Stomach (tissue), 19 donors: ENCODE measurements at regions of chr5 and their contacts with region 1.

Region 1: GRCh38 chr5:81859624-81860023 is 108.7 kb upstream of the SSBP2 start:
- DNase-seq: no peak
- H3K4me3 ChIP-seq: no peak overlapping the region
- H3K27ac ChIP-seq: no peak overlapping the region
- H3K4me1 ChIP-seq: peaks cover 10 to 35% (median 16%) of the 10 kb centered on the region in 4 donors
- H3K27me3 ChIP-seq: no peaks in the 10 kb centered on the region
- CTCF ChIP-seq: no peak
- EP300 ChIP-seq: no peak
- POLR2A ChIP-seq: no peak

Region 2: GRCh38 chr5:81513982-81514381 is 345.6 kb before region 1 on chr5:
- intact Hi-C with region 1: loop called (anchors 10 kb)
- DNase-seq: no peak
- H3K4me3 ChIP-seq: no peak overlapping the region
- H3K27ac ChIP-seq: no peak overlapping the region
- H3K4me1 ChIP-seq: no peaks in the 10 kb centered on the region
- H3K27me3 ChIP-seq: no peaks in the 10 kb centered on the region
- CTCF ChIP-seq: peak in 1 of 7 experiments; percentile 16
- EP300 ChIP-seq: no peak
- POLR2A ChIP-seq: no peak

Region 3: GRCh38 chr5:81980598-81981260 is 121.1 kb after region 1 on chr5:
- intact Hi-C with region 1: loop called (anchors 10 kb)
- DNase-seq: no peak
- H3K4me3 ChIP-seq: no peak overlapping the region
- H3K27ac ChIP-seq: no peak overlapping the region
- H3K4me1 ChIP-seq: no peaks in the 10 kb centered on the region
- H3K27me3 ChIP-seq: no peaks in the 10 kb centered on the region
- CTCF ChIP-seq: no peak
- EP300 ChIP-seq: no peak
- POLR2A ChIP-seq: no peak